CD4-positive, alpha-beta T cell (primary cell): ENCODE measurements at regions of chr16 and their contacts with region 1.

Region 1: DNA sequence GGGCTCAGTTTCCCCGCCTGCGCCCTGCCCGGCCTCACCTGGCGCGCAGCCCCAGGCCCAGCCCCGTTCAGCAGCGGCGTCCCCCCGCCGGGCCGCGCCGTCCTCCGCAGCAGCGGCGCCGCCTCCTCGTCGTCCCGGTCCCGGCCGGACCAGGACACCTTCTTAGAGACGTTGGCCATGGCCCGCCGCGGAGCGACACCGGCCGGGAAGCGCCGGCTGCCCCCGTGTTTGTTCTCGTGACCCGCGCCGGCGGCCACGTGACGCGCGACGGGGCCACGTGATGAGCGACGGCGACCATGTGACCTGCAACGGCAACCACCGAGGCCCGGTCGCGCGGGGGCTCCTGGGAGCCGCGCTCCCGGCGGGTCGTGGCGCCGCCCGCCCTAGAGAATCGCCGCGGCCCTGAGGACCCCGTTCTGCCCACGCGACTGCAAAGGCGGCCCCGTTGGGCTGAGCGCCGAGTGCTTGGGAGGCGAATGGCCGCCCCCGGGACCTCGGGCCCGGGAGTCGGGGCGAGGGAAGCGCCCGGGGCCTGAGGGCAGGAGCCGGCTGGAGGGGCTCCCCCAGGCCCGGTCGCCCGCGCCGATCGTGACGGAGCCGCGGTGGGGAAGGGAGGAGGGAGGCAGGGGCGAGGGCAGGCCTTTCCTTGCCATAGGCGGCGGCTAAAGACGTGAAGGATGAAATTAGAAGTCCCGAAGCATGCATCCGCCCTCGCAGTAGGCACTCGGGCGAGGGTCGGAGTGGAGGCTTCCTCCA is at the start of gene CLCN7:
- DNase-seq: peak; percentile 70 to 94 (median 84)
- ATAC-seq: peak; percentile 87
- H3K4me3 ChIP-seq: peak within 1 kb of the TSS; percentile 62
- H3K4me3 Mint-ChIP-seq: peak within 1 kb of the TSS; percentile 88
- H3K27ac ChIP-seq: peak within 1 kb of the TSS; percentile 72 to 84
- H3K27ac Mint-ChIP-seq: peak within 1 kb of the TSS; percentile 89
- H3K4me1 ChIP-seq: peaks cover 41% of the 10 kb centered on the region
- H3K4me1 Mint-ChIP-seq: peaks cover 43% of the 10 kb centered on the region
- H3K27me3 ChIP-seq: no peaks in the 10 kb centered on the region
- H3K27me3 Mint-ChIP-seq: no peaks in the 10 kb centered on the region
- CTCF ChIP-seq: no peak
- total RNA-seq, gene CLCN7: 70.5 to 76.2 TPM

Region 2: DNA sequence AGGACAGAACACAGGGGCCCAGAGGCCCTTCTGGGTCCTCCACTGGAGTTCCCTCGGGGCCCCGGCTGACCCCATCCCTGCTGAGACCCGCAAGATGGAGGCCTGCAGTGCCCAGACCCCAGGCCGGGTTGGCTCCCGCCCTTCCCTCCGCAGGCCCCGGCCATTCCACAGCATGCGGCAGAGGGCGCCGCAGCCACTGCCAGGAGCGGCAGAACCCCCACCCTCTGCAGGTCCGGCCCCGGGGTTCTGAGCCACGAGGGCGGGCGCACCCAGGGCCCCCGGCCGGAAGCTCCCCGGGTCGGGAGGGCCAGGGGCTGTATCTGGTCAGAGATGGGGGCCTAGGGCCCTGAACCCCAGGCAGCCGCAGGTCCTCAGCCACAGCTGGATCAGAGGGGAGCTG is 46.5 kb before region 1 on chr16:
- CTCF ChIA-PET with region 1: no interaction called
- POLR2A ChIA-PET with region 1: no interaction called
- intact Hi-C with region 1: loop called in 1 of 2 experiments (anchors 10 kb)
- DNase-seq: peak in 11 of 14 experiments; percentile 15 to 65 (median 33)
- ATAC-seq: peak; percentile 71
- H3K4me3 ChIP-seq: no peak overlapping the region
- H3K4me3 Mint-ChIP-seq: no peak overlapping the region
- H3K27ac ChIP-seq: no peak overlapping the region
- H3K27ac Mint-ChIP-seq: no peak overlapping the region
- H3K4me1 ChIP-seq: peaks cover 14% of the 10 kb centered on the region
- H3K4me1 Mint-ChIP-seq: no peaks in the 10 kb centered on the region
- H3K27me3 ChIP-seq: peaks cover 0 to 4% of the 10 kb centered on the region in 2 experiments
- H3K27me3 Mint-ChIP-seq: no peaks in the 10 kb centered on the region
- CTCF ChIP-seq: peak; percentile 25

Region 3: DNA sequence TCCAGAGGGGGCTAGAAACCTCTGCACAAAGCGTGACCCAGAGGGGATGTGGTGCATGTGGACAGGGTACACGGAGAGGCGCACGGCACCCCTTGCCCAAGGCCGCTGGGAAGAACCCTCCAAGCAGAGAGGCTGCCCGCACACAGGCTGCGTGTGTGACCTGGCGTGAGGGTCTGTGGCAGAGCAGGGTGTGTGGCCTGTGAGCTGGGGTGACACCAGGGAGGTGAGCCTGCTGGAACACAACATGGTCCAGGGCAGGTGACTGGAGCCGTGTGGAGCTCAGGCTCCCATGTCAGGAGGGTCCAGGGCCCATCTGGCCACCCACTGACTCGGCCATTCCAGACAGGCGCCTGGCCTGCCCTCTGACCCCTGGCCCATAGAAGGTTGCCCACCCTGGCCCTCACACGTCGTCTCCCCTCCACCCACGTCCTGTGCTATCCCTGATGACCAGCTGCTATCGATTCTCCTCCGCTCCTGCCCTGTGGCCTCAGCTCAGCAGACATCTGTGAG is 43.7 kb after region 1 on chr16:
- CTCF ChIA-PET with region 1: no interaction called
- POLR2A ChIA-PET with region 1: no interaction called
- intact Hi-C with region 1: no loop called
- DNase-seq: no peak
- ATAC-seq: no peak
- H3K4me3 ChIP-seq: no peak overlapping the region
- H3K4me3 Mint-ChIP-seq: no peak overlapping the region
- H3K27ac ChIP-seq: no peak overlapping the region
- H3K27ac Mint-ChIP-seq: no peak overlapping the region
- H3K4me1 ChIP-seq: no peaks in the 10 kb centered on the region
- H3K4me1 Mint-ChIP-seq: no peaks in the 10 kb centered on the region
- H3K27me3 ChIP-seq: no peaks in the 10 kb centered on the region
- H3K27me3 Mint-ChIP-seq: no peaks in the 10 kb centered on the region
- CTCF ChIP-seq: no peak

Region 4: DNA sequence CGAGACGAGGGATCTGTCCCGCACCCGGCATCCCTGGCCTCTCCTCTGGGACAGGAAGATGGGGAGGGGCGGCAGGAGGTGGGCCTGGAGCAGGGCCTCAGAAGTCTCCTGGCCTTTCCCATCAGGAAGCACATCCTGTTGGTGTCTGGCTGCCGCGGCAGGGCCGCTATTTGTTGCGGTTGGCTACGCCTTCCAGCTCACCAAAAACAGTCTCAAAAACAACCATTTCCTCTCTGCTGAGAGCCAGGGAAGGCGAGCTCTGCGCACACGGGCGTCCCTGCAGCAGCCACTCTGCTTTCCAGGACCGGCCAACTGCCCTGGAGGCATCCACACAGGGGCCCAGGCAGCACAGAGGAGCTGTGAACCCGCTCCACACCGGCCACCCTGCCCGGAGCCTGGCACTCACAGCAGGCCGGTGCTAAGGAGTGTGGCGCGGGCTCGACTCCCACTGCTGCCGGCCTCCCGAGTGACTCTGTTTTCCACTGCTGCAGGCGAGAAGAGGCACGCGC is 58.5 kb after region 1 on chr16 and contains the start of gene TMEM204:
- CTCF ChIA-PET with region 1: no interaction called
- POLR2A ChIA-PET with region 1: interaction called, 3 read pairs
- intact Hi-C with region 1: loop called (anchors 1 to 10 kb)
- DNase-seq: peak in 13 of 14 experiments; percentile 40 to 75 (median 58)
- ATAC-seq: peak; percentile 47
- H3K4me3 ChIP-seq: peak within 1 kb of the TSS; percentile 98
- H3K4me3 Mint-ChIP-seq: peak within 1 kb of the TSS; percentile 99
- H3K27ac ChIP-seq: peak within 1 kb of the TSS; percentile 55 to 56
- H3K27ac Mint-ChIP-seq: peak within 1 kb of the TSS; percentile 98
- H3K4me1 ChIP-seq: peaks cover 64% of the 10 kb centered on the region
- H3K4me1 Mint-ChIP-seq: peaks cover 59% of the 10 kb centered on the region
- H3K27me3 ChIP-seq: no peaks in the 10 kb centered on the region
- H3K27me3 Mint-ChIP-seq: no peaks in the 10 kb centered on the region
- CTCF ChIP-seq: no peak
- total RNA-seq, gene TMEM204: 20.5 to 22.1 TPM